BJ (cell line): ENCODE measurements at regions of chr6 and their contacts with region 1.

Region 1: DNA sequence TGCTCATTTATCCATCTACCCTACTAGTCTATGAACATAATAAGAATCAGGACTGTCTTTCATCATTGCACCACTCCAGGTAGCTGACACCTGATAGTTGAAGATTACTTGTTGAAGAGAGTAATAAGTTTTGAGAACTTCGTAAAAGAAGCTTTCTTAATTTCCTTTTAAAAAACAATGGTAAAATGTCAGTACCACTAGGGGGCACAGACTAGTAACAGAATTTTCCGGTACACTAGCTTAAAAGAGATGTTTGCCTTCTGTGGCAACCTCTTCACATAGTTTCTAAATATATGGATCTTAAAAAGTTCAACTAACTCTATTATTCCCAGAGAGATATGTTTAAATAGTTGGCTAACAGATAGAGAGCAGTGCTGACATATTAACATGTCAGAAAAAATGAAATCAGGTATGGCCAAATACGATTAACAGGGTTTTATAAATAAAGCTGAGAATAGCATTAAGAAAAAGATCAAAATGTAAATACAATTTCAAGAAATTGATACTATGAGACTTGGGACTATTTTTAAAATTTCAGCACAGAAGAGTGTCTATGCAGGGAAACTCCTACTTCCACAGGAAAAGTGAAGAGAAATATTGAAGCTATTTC is 5.4 kb upstream of the KCNQ5 start:
- DNase-seq: no peak
- H3K4me3 ChIP-seq: no peak overlapping the region
- H3K27me3 ChIP-seq: no peaks in the 10 kb centered on the region
- CTCF ChIP-seq: peak; percentile 69

Region 2: DNA sequence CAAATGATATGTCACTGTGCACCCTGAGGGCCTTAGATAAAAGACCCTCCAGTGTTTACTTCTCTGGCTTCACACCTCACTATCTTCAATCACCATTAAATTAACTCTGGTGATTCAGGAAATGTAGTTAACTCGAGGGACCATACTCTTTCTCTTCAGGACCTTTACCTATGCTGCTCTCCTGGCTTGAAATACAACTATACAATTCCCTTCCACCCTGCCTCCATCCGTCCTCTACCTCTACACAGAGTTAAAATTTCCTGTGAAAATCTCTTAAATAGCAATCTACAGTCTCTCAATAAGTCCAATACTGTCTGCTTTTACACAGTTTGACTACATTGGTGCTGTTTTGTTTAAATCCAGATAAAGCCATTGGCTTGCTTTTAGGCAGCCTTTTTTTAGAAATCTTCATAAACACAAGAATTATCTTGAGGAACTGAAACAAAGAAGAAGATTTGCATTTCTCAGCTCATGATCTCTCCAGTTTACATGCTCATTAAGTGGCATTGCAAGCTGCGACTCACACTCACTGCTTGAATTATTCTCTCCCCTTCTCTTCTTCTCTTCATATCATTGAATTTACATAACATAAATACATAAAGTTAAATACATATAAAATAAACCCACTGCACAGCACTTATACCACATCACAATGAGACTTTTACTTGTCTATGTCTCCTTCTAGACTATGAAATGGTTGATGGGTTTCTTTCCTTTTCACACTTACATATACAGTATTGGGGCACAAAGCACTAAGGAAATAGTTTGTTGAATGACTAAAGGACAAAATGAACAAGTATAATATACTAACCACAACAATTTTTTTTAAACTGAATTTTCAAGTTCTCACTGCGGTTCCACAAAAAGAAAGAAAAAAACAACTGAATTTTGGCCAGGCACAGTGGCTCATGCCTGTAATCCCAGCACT is 233.6 kb before region 1 on chr6:
- CTCF ChIA-PET with region 1: no interaction called
- POLR2A ChIA-PET with region 1: no interaction called
- DNase-seq: no peak
- H3K4me3 ChIP-seq: no peak overlapping the region
- H3K27me3 ChIP-seq: no peaks in the 10 kb centered on the region
- CTCF ChIP-seq: no peak

Region 3: DNA sequence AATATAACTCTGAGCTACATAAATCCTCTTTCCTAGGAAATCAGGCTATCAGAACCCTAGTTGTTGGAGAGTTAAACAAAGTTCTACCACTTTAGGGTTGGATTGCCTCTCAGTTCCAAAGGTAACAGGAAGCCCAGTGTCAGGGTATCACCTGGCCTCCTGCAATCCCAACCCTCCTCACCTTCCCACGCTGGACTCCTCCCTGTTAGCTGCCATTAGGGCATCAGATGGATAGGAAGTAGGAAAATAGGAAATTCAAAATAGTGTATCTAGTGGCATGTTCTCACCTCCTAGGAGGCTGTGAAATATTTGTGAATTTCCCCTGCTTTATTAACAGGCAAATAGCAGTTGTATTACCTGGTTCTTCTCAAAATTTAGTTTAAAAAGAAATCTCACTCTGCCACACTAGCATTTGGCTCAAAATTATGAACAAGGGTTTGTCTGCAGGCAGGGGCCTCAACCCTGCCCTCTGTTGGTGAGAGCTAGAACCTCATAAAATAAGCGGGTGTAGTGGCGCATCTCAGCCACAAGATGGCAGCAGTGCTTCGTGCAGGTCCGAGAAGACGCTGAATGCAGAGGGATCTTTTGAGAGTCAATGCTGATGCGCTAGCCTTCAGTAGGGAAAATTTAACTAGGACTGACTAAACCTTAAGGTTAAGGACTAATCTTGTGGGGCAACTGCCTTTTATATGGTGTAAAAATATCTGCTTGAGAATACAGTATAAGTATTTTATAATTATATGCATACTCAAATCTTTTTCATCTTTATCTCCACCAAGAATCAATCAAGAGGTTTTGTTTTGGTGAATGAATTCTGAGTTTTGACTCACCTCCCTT is 204.4 kb before region 1 on chr6:
- CTCF ChIA-PET with region 1: interaction called, 27 read pairs
- POLR2A ChIA-PET with region 1: no interaction called
- DNase-seq: peak; percentile 20
- H3K4me3 ChIP-seq: no peak overlapping the region
- H3K27me3 ChIP-seq: no peaks in the 10 kb centered on the region
- CTCF ChIP-seq: peak; percentile 100

Region 4: GRCh38 chr6:72589096-72589495 is 27.4 kb before region 1 on chr6:
- CTCF ChIA-PET with region 1: interaction called, 3 read pairs
- POLR2A ChIA-PET with region 1: interaction called, 14 read pairs
- DNase-seq: no peak
- H3K4me3 ChIP-seq: no peak overlapping the region
- H3K27me3 ChIP-seq: no peaks in the 10 kb centered on the region
- CTCF ChIP-seq: no peak

Region 5: DNA sequence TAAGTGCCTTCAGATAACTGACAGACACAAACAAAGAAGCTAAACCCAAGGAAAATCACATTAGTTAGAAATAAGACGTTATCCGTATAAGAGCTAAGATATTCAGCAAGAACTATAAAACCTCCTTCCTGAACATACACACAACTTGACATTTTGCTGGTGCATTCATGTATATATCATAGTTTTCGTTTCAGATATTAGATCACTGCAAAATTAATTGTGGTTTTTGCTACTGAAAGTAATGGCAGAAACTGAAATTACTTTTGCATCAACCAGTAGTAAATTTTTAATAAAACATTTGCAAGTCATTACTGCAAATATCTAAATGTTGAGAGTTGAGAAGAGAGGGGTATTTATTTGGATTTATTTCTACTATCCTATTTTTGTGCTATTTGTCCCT is 20.7 kb before region 1 on chr6:
- CTCF ChIA-PET with region 1: interaction called, 3 read pairs
- POLR2A ChIA-PET with region 1: interaction called, 15 read pairs
- DNase-seq: no peak
- H3K4me3 ChIP-seq: no peak overlapping the region
- H3K27me3 ChIP-seq: no peaks in the 10 kb centered on the region
- CTCF ChIP-seq: no peak

Region 6: DNA sequence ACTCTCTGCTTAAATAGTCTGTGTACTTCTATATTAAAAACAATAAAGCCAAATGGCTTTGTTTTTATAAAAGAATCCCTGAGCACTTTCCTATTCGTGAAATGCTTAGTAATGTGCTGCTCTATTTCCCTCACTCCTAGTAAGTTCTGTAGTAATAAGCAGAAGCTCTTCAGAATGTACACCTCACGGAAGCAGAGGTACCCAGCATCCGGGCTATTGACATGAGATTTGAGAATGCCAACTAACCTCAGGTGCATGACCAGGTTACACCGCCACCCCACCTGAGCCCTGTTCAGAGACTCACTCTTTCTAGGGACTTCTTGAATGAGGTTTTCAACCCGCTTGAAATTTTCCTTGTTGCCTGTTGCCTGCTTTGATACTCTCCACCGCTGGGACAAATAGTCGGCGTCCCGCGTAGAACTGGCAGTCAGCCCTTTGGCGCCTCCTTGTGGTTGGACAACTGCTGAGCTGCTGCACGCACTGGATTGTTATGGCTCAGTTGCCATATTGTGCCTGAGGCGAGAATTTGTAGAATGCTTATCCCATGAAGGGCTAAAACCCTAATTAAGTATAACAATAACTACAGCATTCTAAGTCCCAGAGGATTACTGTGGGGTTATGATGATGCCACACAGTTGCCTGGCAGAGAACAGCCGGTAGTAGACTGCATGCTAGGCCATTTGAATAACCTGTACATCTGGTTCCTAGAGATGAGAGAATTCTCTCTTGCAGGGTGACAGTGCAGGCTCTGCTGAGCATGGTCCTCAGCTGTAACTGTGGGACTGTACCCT is 513.3 kb after region 1 on chr6:
- CTCF ChIA-PET with region 1: interaction called, 117 read pairs
- POLR2A ChIA-PET with region 1: no interaction called
- DNase-seq: peak; percentile 17
- H3K4me3 ChIP-seq: no peak overlapping the region
- H3K27me3 ChIP-seq: no peaks in the 10 kb centered on the region
- CTCF ChIP-seq: peak; percentile 97

Region 7: DNA sequence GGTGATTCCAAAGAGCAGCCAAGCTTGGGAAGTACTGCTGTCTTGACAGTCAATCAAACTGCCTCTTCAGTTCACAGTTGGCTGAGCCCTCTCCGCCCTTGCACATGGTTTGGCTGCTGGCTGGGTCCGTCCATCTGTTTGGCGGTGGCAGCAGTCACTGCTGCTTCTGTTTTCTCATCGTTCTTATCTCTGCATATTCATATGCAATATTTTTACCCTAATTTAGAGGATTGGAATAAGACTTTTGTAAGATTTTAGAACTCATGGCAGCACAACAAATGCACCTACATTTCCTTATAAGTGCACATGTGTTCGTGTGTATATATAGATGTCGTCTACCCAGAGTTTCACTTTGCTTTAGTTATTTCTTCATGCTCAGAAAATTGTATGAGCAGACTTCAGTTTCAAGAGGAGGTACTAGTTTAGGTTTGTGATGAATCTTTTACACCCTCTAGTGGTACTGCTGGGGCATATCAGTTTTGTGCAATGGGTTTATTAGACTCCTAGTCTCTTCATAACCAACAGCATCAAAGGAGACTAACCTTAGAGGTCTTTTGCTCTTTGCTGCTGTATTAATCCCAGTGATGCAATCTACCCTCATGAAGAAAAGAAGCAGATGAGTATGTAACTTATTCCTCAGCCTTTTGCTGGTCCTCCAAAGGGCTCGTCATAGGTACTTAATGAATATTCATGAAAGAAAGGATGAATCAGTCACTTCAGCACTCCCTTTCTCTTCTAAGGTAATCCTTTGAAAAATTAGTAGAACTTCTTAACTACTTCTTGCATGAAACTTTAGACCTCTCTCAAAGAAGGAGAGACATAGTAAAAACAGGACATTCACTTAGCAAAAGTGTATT is 564.5 kb after region 1 on chr6:
- CTCF ChIA-PET with region 1: interaction called, 17 read pairs
- POLR2A ChIA-PET with region 1: no interaction called
- DNase-seq: peak; percentile 28
- H3K4me3 ChIP-seq: peak overlapping the region; percentile 14; the same call in 1 of the 2 replicates
- H3K27me3 ChIP-seq: no peaks in the 10 kb centered on the region
- CTCF ChIP-seq: peak; percentile 84